Ascending aorta (tissue), 2 donors: ENCODE measurements at regions of chr5 and their contacts with region 1.

Region 1: GRCh38 chr5:131634996-131635754 is at the start of gene RAPGEF6:
- DNase-seq: peak; percentile 98 to 100
- H3K4me3 ChIP-seq: peak within 1 kb of the TSS; percentile 70 to 95
- H3K27ac ChIP-seq: peak within 1 kb of the TSS; percentile 99
- H3K4me1 ChIP-seq: peaks cover 9 to 14% of the 10 kb centered on the region in 2 donors
- H3K27me3 ChIP-seq: no peaks in the 10 kb centered on the region
- CTCF ChIP-seq: no peak
- total RNA-seq, gene RAPGEF6: 22.9 TPM

Region 2: DNA sequence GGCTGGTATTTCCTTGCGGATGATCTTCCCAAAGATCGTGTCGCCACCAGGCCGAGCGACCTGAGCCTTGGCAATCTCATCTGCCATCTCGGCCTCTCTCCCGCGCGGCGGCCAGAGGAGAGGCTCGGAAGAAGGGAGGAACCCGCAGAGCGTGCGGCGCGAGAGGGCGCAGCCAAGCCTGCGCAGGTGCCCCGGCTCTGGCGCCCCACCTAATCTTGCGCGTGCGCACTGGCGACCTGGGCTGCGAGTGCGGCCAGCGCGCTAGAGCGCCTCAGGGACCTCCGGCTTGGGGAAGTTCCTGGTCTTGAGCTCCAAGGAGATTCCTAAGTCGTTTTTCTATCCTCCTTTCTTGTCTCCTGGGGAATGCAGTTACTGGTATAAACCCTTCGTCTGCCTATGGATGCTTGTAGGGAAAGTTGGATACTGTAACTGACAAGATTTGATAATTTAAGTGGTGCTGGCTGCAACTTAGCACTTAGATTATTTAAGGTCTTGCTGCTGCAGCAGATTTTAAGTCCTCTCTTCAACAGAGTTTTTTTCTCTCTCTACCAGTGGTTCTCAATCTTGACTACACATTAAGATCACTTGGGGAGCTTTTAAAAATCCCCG is 470.0 kb before region 1 on chr5 and contains the start of gene HINT1:
- intact Hi-C with region 1: loop called (anchors 10 kb)
- DNase-seq: peak; percentile 53 to 94
- H3K4me3 ChIP-seq: peak within 1 kb of the TSS; percentile 82 to 83
- H3K27ac ChIP-seq: peak within 1 kb of the TSS; percentile 92 to 94
- H3K4me1 ChIP-seq: peaks cover 3 to 13% of the 10 kb centered on the region in 2 donors
- H3K27me3 ChIP-seq: no peaks in the 10 kb centered on the region
- CTCF ChIP-seq: no peak
- total RNA-seq, gene HINT1: 78.9 TPM

Region 3: DNA sequence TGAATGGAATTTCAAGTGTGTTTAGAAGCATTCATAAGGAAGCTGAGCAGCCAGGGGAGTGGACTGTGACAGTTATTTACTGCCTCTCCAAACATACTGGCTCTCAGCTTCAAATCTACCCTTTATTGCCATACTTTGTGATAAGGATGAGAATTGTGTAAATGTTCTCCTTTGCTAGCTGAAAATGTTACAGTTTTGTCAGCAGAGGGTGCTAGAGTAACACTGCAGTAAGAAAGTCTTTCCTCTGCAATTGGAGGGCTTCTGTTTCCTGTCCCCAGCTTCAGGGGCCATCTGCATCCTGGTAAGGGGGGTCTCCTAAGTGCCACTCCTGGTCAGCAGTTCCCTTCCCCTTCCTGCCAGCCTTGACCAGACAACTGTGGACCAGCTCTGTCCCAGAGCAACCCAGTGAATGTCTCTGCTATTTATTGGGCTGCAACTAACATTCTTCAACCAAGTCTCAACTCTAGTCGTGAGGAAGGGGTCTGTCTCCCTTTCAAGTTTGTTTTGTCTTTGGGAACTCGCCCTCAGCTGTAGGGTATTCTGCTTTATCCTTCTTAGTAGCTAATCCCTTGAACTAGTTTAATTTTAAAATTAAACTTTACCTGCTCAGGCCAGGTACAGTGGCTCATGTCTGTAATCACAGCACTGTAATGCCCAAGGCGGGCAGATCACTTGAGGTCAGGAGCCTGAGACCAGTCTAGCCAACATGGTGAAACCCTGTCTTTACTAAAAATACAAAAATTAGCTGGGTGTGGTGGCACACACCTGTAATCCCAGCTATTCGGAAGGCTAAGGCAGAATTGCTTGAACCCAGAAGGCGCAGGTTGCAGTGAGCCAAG is 45.4 kb before region 1 on chr5:
- intact Hi-C with region 1: loop called (anchors 5 kb)
- DNase-seq: no peak
- H3K4me3 ChIP-seq: no peak overlapping the region
- H3K27ac ChIP-seq: no peak overlapping the region
- H3K4me1 ChIP-seq: no peaks in the 10 kb centered on the region
- H3K27me3 ChIP-seq: no peaks in the 10 kb centered on the region
- CTCF ChIP-seq: peak; percentile 72 to 95 (median 82)

Region 4: DNA sequence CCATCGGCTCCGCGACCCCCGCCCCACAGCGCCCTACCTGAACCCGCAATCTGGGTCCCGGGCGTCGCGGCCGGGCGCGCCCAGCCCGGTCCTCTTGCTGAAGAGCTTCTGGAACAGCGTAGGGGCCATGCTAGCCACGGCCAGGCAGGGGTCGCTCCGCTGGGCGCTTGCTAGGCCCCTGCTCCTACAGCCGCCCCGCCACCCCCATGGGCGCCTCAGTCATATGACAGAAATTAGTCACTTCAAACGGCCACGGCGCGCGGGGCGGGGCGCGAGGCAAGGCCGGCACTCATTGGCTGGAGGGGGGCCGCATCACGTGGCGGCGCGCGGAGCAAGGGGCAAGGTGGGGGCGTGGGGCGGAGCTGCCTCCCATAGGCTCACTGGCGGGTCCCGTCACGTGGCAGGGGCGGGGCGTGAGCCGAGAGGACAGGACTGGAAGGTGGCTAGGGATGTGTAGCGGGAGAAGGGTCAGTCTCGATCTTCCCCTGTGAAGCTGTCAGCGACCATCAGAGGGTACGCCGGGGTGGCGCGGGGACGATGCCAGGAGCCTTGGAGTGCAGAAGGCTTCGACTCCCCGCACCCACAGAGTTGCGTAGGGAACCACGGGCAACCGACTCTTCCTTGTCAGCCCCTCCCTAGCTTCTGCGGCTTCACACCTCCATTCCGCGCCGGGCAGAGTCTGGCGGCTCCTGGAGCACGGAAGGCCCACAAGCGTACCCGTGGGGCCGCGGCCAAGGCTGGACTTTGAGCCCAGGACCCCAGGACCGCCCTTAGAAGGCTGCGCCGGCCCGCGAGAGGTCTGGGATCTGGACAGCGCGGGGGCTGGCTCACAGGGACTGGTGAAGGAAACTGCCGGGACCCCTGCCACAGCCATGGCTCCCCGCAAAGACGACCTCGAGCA is 161.9 kb after region 1 on chr5 and contains the start of gene FNIP1:
- intact Hi-C with region 1: loop called (anchors 1 kb)
- DNase-seq: peak; percentile 99 to 100
- H3K4me3 ChIP-seq: peak within 1 kb of the TSS; percentile 73 to 98
- H3K27ac ChIP-seq: peak within 1 kb of the TSS; percentile 95 to 99
- H3K4me1 ChIP-seq: peaks cover 0 to 18% of the 10 kb centered on the region in 2 donors
- H3K27me3 ChIP-seq: no peaks in the 10 kb centered on the region
- CTCF ChIP-seq: no peak
- total RNA-seq, gene FNIP1: 20.5 TPM

Region 5: GRCh38 chr5:131810510-131811249 is 175.5 kb after region 1 on chr5:
- intact Hi-C with region 1: loop called (anchors 5 kb)
- DNase-seq: no peak
- H3K4me3 ChIP-seq: peak overlapping the region; percentile 4 to 15
- H3K27ac ChIP-seq: peak overlapping the region; percentile 50 to 61
- H3K4me1 ChIP-seq: peaks cover 3 to 4% of the 10 kb centered on the region in 2 donors
- H3K27me3 ChIP-seq: no peaks in the 10 kb centered on the region
- CTCF ChIP-seq: peak in 2 of 3 experiments; percentile 15 to 37

Region 6: GRCh38 chr5:132259069-132259851 is 624.1 kb after region 1 on chr5:
- intact Hi-C with region 1: loop called (anchors 10 kb)
- DNase-seq: peak in 1 of 2 donors; percentile 89
- H3K4me3 ChIP-seq: peak overlapping the region; percentile 62 to 81
- H3K27ac ChIP-seq: peak overlapping the region; percentile 98 to 99
- H3K4me1 ChIP-seq: peaks cover 20 to 60% of the 10 kb centered on the region in 2 donors
- H3K27me3 ChIP-seq: no peaks in the 10 kb centered on the region
- CTCF ChIP-seq: peak in 1 of 3 experiments; percentile 3